Left colon (tissue), 2 donors: ENCODE measurements at regions of chr2 and their contacts with region 1.

Region 1: DNA sequence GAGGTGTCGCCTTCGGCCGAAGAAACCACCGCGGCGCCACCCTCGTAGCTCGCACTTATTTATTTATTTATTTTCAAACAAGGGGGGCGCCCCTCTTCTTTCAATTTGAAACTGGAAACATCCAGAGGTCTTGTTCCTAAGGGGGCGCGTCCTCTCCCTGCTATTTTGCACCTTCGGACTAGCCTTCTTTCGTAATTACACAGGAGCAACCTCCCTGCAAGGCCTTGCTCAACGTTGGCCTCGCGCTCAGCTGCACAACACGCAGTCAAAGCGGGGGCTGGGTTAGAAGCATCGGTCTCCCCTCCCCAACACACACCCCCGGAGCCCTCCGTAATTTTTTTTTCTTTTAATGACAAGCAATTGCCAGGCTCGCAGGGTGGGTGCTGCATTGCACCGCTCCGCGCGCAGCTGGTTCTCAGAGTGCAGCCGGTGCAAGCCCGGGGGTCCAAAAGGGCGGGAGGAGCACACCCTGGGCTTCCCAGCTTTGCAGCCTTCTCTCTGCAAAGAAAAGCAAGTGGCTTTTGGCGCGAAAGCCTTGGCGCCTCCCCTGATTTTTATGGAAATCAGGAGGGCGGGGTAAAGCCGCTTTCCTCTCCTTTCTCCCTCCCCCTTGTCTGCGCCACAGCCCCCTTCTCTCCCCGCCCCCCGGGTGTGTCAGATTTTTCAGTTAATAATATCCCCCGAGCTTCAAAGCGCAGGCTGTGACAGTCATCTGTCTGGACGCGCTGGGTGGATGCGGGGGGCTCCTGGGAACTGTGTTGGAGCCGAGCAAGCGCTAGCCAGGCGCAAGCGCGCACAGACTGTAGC is at the start of gene MYCN:
- DNase-seq: peak; percentile 61 to 67
- ATAC-seq: peak; percentile 66
- total RNA-seq, gene MYCN: 0.76 to 2.3 TPM

Region 2: DNA sequence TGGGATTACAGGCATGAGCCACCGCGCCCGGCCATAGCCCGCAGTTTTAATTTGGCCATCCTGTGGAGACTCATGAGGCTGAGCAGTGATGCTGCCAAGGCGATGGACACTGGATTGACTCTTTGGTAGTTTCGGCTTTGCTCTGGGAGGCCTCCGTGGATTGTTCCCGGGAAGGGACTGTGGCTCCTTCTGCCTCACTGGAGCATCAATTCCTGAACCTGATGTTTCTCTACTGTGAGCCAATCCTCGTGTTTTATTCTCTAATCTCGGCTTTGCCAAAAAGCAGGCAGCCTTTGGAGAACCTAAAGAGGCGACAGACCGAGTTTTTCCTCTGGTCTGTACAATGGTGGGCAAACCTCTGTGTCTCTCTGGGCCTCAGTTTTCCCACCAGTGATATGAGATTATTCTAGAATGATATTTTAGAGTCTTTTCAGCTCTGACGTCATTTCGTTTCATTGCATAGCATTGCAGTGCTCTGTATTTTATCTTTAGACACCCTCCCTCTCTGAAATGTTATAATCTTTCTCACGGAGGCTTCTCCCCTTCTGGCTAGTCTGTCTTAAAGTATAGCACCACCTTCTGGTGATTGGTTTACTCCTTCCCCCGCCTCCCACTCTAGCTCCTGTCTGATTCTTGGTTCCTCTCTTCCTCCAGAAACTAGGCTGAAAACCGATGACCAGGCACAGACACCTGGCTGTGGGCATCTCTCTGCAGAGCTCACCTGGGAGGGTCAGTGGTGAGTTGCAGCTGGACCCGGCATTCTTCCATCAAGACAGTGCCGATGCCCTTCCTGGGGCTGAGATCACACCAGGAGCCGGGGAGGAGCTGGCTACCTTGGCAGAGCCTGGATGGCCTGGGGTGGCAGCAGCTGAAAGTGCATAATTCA is 341.6 kb after region 1 on chr2:
- intact Hi-C with region 1: loop called in 1 of 2 experiments (anchors 5 kb)
- DNase-seq: peak in 1 of 2 donors; percentile 16
- ATAC-seq: peak; percentile 79

Region 3: GRCh38 chr2:16513626-16514025 is 573.6 kb after region 1 on chr2:
- intact Hi-C with region 1: loop called in 1 of 2 experiments (anchors 10 kb)
- DNase-seq: no peak
- ATAC-seq: no peak